AG04449 (cell line): ENCODE measurements at regions of chr14 and their contacts with region 1.

Region 1: DNA sequence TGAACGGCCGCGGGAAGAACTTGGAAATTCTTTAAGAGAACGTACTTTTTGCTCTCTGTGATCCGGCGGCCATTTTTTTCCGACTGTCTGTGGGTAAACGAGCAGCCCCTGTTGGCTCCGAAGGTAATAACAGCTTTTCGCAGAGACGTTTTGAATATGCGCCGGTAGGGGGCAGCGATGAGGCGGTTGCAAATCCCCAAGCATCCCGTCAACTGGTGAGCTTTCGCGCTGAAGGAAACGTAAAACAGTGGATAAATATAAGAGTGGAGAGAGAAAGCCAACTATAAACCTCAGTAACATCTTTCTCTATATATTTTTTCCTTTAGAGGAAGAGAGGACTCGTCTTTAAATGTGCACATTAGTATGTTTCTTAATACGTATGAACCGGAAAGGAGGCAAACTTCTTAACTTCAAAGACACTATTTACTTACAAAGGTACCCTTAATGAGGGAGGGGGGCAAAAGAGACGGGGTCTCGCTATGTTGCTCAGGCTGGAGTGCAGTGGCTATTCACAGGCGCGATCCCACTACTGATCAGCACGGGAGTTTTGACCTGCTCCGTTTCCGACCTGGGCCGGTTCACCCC is 9.6 kb upstream of the NEMF start:
- DNase-seq: peak; percentile 45
- H3K4me3 ChIP-seq: peak overlapping the region; percentile 64
- CTCF ChIP-seq: peak; percentile 99

Region 2: GRCh38 chr14:49892636-49893308 is 30.6 kb after region 1 on chr14 and contains the start of gene ARF6:
- CTCF ChIA-PET with region 1: interaction called, 21 read pairs
- POLR2A ChIA-PET with region 1: interaction called, 17 read pairs
- DNase-seq: peak; percentile 77
- H3K4me3 ChIP-seq: peak within 1 kb of the TSS; percentile 80
- CTCF ChIP-seq: peak; percentile 15

Region 3: GRCh38 chr14:50003213-50004031 is 141.2 kb after region 1 on chr14:
- CTCF ChIA-PET with region 1: interaction called, 30 read pairs
- POLR2A ChIA-PET with region 1: interaction called, 18 read pairs
- DNase-seq: no peak
- H3K4me3 ChIP-seq: peak overlapping the region; percentile 54
- CTCF ChIP-seq: no peak

Region 4: GRCh38 chr14:50060871-50061663 is 198.9 kb after region 1 on chr14:
- CTCF ChIA-PET with region 1: interaction called, 30 read pairs
- POLR2A ChIA-PET with region 1: interaction called, 7 read pairs
- DNase-seq: peak; percentile 83
- H3K4me3 ChIP-seq: peak overlapping the region; percentile 2
- CTCF ChIP-seq: no peak

Region 5: DNA sequence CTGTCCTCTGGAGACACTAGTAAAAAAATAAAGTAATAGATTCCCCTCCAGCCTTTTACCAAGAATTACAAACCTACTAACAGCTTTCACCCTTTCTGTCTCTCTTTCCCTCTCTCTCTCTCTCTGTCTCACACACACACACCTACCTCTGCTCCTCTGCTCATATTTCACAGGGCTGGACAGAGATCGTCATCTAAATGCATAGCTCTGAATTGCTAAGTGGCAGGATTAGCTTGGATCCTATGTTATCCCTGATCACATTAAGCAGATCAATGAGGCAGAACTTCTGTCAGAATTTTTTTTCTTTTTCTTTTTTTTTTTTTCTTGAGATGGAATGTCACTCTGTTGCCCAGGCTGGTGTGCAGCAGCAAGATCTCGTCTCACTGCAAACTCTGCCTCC is 231.3 kb after region 1 on chr14:
- CTCF ChIA-PET with region 1: interaction called, 368 read pairs
- POLR2A ChIA-PET with region 1: no interaction called
- DNase-seq: no peak
- H3K4me3 ChIP-seq: no peak overlapping the region
- CTCF ChIP-seq: no peak